ENCODE measurements at regions of chr11 and their contacts with region 1.

Region 1: DNA sequence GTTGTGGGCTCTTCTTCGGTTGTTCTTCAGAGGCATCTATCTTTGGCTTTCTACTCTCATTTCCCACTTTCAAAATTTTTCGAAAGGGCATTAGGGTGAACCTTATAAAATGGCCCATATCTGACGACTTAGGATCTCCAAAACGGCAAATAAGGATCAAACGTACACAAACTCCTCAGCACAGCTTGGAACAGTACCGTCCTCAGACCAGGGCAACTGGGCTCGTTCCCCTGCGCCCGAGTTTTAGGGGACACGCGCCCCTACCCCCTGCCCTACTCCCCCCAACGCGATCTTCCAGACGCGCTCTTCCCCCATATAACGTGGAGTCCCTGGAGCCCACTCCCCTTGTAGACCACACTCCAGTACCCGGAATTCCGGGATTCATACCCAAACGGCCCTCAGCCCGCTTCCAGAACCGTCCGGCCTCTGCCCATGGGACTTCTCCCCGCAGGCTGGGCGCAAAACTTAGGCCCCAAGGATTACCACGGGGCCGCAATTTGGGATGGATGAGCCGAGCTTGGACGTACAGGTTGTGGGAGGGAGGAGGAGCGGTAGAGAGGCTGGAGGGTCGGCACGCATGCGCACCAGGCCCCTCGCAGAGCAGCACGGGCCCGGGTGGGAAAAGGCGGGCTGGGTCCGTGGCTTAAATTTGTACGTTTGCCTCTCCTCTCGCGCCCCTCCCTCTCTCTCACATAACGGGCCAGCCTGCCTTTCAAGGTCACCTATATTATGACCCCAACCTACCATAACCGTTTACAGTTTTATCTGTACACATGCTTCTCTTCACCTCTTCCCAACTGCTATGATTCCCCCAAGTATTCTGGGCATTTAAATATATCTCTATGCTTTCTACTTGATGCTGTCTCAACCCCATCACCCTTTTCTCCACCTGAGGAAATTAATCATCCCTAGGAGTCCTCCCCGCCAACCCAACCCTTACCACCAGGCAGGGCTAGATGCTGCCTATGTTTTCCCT is 3.4 kb downstream of the CCDC89 start:
- DNase-seq: peak; percentile 58
- H3K4me3 ChIP-seq: peak overlapping the region; percentile 52 to 57
- H3K27ac ChIP-seq: peak overlapping the region; percentile 36 to 56
- H3K4me1 ChIP-seq: no peaks in the 10 kb centered on the region
- H3K27me3 ChIP-seq: no peaks in the 10 kb centered on the region
- CTCF ChIP-seq: no peak
- POLR2A ChIP-seq: peak; percentile 13

Region 2: DNA sequence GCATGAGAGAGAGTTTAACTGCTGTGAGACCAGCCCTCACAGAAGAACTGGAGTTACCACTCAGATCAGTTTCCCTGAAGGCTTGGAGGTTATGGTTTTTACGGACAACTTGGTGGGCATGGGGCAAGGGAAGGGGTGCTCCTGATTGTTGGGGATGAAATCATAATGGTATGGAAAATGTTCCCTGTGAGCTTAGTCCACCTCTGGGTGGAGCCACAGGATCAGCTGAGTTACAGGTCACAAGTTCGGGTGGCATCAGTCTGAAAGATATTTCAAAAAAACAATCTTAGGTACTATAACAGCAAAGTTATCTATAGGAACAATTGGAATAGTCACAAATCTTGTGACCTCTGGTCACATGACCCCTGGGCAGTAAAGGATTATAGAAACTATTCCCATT is 218.3 kb before region 1 on chr11:
- intact Hi-C with region 1: no loop called
- DNase-seq: no peak
- H3K4me3 ChIP-seq: no peak overlapping the region
- H3K27ac ChIP-seq: no peak overlapping the region
- H3K4me1 ChIP-seq: no peaks in the 10 kb centered on the region
- H3K27me3 ChIP-seq: no peaks in the 10 kb centered on the region
- CTCF ChIP-seq: no peak
- POLR2A ChIP-seq: no peak

Region 3: DNA sequence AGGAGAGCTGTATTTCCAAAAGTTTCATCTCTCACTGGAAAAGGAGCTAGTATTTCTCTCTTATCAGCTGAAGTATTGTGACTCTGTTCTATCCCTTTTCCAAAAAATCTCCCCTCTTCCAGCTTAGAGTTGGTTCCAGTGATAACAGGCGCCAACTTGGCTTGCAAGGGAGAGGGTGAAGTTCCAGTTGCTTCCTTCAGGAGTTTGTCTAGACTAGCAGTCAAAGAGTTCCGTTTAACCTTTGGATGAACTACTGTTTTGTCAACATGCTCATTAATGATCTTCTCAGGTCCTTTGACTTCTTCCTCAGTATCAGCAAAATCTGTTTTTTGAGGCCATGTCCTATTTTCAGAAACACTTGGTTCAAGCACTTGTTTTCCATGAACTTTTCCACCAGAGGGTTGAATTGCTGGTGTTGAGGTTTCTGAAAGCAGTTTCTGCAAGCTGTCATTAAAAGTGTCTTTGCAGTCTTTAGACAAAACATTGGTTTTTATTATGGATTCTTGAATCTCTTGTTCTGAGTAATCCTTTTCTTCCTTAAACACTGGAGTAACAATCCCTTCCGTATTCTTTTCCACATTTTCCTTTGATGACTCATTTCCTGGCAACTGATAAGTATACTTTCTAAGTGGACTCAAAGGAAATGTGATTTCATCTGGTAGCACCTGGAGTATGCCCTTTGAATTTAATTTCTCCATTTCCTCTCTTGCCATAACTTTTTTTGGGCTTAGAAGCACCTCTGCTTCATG is 43.1 kb after region 1 on chr11:
- intact Hi-C with region 1: no loop called
- DNase-seq: no peak
- H3K4me3 ChIP-seq: no peak overlapping the region
- H3K27ac ChIP-seq: no peak overlapping the region
- H3K4me1 ChIP-seq: no peaks in the 10 kb centered on the region
- H3K27me3 ChIP-seq: no peaks in the 10 kb centered on the region
- CTCF ChIP-seq: peak in 1 of 4 experiments; percentile 15
- POLR2A ChIP-seq: no peak

Region 4: GRCh38 chr11:85826116-85826855 is 143.7 kb after region 1 on chr11:
- intact Hi-C with region 1: loop called (anchors 10 kb)
- DNase-seq: no peak
- H3K4me3 ChIP-seq: no peak overlapping the region
- H3K27ac ChIP-seq: peak overlapping the region; percentile 64 to 75
- H3K4me1 ChIP-seq: peaks cover 18% of the 10 kb centered on the region
- H3K27me3 ChIP-seq: no peaks in the 10 kb centered on the region
- CTCF ChIP-seq: peak in 2 of 4 experiments; percentile 22 to 38
- POLR2A ChIP-seq: no peak

Region 5: DNA sequence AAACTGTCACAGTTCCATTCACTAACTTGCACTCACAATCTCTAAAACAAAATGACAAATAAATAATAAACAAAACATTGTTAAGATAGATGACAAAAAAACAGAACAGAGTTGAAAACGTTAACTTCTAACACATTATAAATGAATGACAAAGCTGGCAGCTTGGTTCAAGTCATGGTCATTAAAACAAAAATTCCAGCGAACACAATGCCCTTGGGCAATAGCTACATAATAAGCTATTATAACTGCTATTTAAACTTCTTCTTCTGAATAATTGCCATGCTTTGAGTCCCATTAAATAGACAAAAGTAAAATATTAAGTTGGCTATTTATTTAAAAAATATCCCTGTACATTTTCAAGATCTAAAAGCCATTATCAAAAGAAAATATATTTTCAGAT is 331.6 kb after region 1 on chr11:
- intact Hi-C with region 1: no loop called
- DNase-seq: no peak
- H3K4me3 ChIP-seq: no peak overlapping the region
- H3K27ac ChIP-seq: no peak overlapping the region
- H3K4me1 ChIP-seq: no peaks in the 10 kb centered on the region
- H3K27me3 ChIP-seq: no peaks in the 10 kb centered on the region
- CTCF ChIP-seq: no peak
- POLR2A ChIP-seq: no peak

Measured in prostate gland (tissue), 2 donors.